Left ventricle myocardium inferior (tissue), 1 donor: ENCODE measurements at regions of chr16 and their contacts with region 1.

Region 1: GRCh38 chr16:72277749-72278148 is 105.8 kb upstream of the PMFBP1 start:
- DNase-seq: no peak
- H3K4me3 ChIP-seq: no peak overlapping the region
- H3K27ac ChIP-seq: no peak overlapping the region
- H3K4me1 ChIP-seq: no peaks in the 10 kb centered on the region
- H3K27me3 ChIP-seq: no peaks in the 10 kb centered on the region
- CTCF ChIP-seq: no peak

Region 2: GRCh38 chr16:74190292-74190691 is 1912.5 kb after region 1 on chr16:
- intact Hi-C with region 1: loop called (anchors 5 kb)
- DNase-seq: no peak
- H3K4me3 ChIP-seq: no peak overlapping the region
- H3K27ac ChIP-seq: no peak overlapping the region
- H3K4me1 ChIP-seq: no peaks in the 10 kb centered on the region
- H3K27me3 ChIP-seq: no peaks in the 10 kb centered on the region
- CTCF ChIP-seq: no peak